ENCODE measurements at regions of chr12 and their contacts with region 1.

Region 1: DNA sequence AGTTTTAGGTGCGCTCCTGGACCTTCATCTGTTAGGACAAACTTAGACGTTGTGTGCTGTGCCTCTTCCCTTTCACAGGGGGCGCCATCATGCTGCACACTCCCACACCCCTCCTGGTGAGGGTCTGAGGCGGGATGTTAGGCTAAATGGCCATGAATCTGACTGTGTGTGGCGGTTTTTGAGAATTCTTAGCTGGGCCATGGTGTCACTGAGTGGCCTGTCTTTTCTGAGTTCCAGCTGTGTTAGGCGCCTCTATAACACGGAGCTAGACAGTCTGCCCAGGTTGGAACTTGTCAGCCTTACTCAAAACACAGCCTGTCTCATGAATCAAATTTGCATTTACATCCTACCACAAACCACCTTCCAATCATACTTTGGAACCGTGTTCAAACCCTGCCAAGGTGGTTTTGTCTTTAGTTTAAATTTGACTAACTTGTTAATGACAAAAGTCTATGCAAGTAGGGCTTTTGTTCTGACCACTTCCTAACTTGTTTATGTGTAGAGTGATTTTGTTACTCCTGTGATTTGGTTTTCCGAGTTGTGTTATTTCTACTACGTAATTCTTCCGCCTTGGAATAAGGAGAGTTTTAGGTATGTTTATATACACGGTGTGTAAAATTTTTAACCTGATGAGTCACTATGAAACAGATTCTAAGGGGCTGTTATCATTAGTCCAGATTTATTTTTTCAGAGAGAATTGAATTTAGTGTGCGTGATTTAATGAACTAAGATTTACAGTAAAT is 19.6 kb downstream of the ACVR1B start:
- DNase-seq: peak; percentile 75
- H3K4me3 Mint-ChIP-seq: peak overlapping the region; percentile 67
- H3K27ac Mint-ChIP-seq: peak overlapping the region; percentile 66
- H3K4me1 Mint-ChIP-seq: peaks cover 61% of the 10 kb centered on the region
- H3K27me3 Mint-ChIP-seq: peaks cover 6% of the 10 kb centered on the region

Region 2: DNA sequence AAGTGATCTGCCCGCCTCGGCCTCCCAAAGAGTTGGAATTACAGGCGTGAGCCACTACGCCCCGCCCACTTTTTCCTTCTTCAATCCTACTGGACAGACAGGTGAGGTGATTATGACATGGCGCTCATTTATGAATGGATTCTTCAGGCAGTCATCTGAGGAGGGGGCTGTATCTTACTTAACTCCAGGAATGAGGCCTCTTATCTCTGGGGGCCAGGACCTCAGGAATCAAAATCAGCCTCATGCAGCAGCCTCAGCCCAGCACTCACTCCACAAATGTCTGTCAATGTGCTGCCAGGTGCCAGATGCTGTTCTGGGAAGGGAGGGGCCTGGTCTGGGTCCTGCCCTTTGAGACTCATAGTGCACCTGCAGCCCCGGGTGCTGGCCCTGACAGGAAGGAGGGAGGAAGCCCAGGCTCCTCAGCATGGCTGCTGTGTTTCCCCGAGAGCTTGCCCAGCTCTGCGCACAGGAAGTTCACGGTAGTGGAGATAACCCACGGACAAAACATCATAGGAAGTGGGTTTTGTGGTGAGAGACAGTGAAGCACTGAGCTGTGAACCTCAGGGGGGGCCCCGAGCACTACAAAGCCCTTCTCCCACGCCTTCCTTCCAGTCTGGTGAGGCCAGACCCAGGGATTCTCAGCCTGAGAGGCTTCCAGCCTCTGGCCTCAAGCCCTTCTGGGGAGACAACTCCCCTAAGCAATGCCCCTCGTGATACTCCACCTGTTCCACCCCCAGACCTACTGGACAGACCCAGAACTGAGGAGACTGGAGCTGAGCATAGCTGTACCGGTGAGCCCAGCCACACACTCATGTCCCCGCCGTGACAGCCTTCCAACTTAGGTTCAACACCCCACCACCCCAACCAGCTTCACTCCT is 602.2 kb before region 1 on chr12:
- CTCF ChIA-PET with region 1: interaction called, 6 read pairs
- POLR2A ChIA-PET with region 1: no interaction called
- intact Hi-C with region 1: loop called (anchors 2 kb)
- DNase-seq: peak; percentile 95
- H3K4me3 Mint-ChIP-seq: peak overlapping the region; percentile 61
- H3K27ac Mint-ChIP-seq: peak overlapping the region; percentile 86
- H3K4me1 Mint-ChIP-seq: peaks cover 51% of the 10 kb centered on the region
- H3K27me3 Mint-ChIP-seq: no peaks in the 10 kb centered on the region

Region 3: DNA sequence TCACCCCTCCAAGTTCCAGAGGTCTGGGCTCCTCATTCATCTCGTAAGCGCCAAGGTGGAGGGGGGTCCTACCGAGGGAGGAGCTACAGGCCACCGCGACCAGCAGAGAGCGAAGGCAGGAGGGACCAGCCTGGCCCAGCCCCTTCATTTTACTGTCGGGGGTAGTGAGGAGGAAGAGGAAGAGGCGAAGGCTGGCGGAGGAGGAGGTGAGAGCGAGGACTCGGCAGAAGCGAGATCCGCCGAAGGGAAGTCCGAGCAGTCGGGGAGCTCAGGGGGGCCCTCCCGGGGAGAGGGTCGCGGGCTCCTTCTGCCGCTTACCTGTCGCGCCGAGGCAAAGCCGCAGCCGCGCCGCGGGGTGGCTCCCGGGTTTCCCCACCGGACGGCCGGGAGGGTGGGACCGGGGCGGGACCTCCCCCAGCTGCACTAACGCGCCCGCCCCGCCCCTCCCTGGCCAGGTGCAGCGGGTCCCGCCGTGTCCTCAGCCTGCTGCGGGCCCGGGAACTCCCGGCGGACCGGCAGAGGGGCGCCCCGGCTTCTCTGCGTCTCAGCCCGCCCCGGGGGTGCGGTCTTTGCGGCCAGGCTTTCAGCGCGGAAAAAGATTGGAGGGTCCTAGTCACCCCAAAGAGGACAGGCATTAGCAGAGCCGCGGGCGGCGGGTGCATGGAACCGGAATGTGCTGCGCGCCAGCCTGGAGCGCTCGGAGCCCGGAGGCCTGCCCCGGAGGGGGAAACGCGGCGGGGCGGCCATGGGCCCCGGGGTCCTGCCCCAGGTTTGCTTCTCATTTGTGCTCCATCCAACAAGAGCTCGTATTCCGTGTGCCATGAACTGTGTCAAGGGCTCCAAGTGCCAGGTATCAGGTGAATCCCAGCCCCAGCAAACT is 579.6 kb before region 1 on chr12 and contains the start of gene GALNT6:
- CTCF ChIA-PET with region 1: no interaction called
- POLR2A ChIA-PET with region 1: no interaction called
- intact Hi-C with region 1: loop called (anchors 10 kb)
- DNase-seq: peak; percentile 71
- H3K4me3 Mint-ChIP-seq: peak within 1 kb of the TSS; percentile 85
- H3K27ac Mint-ChIP-seq: peak within 1 kb of the TSS; percentile 35
- H3K4me1 Mint-ChIP-seq: peaks cover 67% of the 10 kb centered on the region
- H3K27me3 Mint-ChIP-seq: no peaks in the 10 kb centered on the region
- total RNA-seq, gene GALNT6: 13.1 to 15.8 TPM

Region 4: DNA sequence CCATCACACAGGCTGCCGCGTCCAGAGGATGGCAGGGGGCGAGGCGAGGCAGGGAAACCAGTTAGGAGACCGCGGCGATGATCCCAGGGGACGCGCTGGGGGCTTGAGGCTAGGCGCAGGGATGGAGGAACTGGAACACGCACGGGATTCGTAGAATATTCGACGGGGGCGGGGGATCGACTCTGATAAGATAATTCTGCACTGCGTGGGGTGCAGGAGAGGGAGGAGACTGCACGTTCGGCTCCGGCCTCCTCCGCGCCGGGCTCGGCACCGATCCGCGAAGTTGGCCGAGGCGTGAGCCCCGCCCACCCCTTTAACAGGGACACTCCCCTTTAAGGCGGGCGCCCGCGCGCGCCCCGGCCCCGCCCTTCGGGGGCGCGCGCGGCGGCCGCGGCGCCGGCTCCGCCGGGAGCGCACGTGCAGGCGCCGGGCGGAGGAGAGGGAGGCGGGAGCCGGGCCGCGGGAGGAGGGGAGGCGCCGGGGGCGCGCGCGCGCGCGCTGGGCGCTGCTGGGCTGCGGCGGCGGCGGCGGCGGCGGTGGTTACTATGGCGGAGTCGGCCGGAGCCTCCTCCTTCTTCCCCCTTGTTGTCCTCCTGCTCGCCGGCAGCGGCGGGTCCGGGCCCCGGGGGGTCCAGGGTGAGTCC is 19.8 kb before region 1 on chr12 and contains the start of gene ACVR1B:
- CTCF ChIA-PET with region 1: interaction called, 20 read pairs
- POLR2A ChIA-PET with region 1: no interaction called
- intact Hi-C with region 1: loop called (anchors 1 kb)
- DNase-seq: peak; percentile 93
- H3K4me3 Mint-ChIP-seq: peak within 1 kb of the TSS; percentile 81
- H3K27ac Mint-ChIP-seq: peak within 1 kb of the TSS; percentile 47
- H3K4me1 Mint-ChIP-seq: peaks cover 40% of the 10 kb centered on the region
- H3K27me3 Mint-ChIP-seq: peaks cover 6% of the 10 kb centered on the region
- total RNA-seq, gene ACVR1B: 8.0 to 8.3 TPM

Region 5: DNA sequence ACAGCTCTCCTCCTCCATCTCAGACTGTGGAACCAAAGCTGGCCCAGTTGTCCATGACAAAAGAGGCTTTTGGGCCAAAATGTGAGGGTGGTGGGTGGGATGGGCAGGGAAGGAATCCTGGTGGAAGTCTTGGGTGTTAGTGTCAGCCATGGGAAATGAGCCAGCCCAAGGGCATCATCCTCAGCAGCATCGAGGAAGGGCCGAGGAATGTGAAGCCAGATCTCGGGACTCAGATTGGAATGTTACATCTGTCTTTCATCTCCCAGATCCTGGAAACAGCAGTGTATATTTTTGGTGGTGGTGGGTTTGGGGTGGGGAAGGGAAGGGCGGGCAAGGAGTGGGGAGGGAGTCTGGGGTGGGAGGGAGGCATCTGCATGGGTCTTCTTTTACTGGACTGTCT is 23.9 kb after region 1 on chr12:
- CTCF ChIA-PET with region 1: interaction called, 11 read pairs
- POLR2A ChIA-PET with region 1: no interaction called
- intact Hi-C with region 1: no loop called
- DNase-seq: no peak
- H3K4me3 Mint-ChIP-seq: no peak overlapping the region
- H3K27ac Mint-ChIP-seq: no peak overlapping the region
- H3K4me1 Mint-ChIP-seq: peaks cover 7% of the 10 kb centered on the region
- H3K27me3 Mint-ChIP-seq: no peaks in the 10 kb centered on the region